Heart right ventricle (tissue), 16 donors: ENCODE measurements at regions of chr11 and their contacts with region 1.

Region 1: GRCh38 chr11:62306227-62306626 is 7.4 kb upstream of the SCGB1D4 start:
- DNase-seq: no peak
- ATAC-seq: no peak
- H3K4me3 ChIP-seq: no peak overlapping the region
- H3K27ac ChIP-seq: no peak overlapping the region
- H3K4me1 ChIP-seq: peaks cover 0 to 4% (median 0%) of the 10 kb centered on the region in 9 donors
- H3K27me3 ChIP-seq: peaks cover 0 to 23% (median 19%) of the 10 kb centered on the region in 7 donors
- CTCF ChIP-seq: no peak

Region 2: GRCh38 chr11:62217191-62217748 is 89.0 kb before region 1 on chr11:
- intact Hi-C with region 1: loop called in 2 of 10 experiments (anchors 5 to 10 kb)
- DNase-seq: no peak
- ATAC-seq: no peak
- H3K4me3 ChIP-seq: no peak overlapping the region
- H3K27ac ChIP-seq: no peak overlapping the region
- H3K4me1 ChIP-seq: no peaks in the 10 kb centered on the region
- H3K27me3 ChIP-seq: peaks cover 0 to 13% (median 2%) of the 10 kb centered on the region in 7 donors
- CTCF ChIP-seq: peak in 4 of 9 donors; percentile 14 to 42 (median 28)

Region 3: DNA sequence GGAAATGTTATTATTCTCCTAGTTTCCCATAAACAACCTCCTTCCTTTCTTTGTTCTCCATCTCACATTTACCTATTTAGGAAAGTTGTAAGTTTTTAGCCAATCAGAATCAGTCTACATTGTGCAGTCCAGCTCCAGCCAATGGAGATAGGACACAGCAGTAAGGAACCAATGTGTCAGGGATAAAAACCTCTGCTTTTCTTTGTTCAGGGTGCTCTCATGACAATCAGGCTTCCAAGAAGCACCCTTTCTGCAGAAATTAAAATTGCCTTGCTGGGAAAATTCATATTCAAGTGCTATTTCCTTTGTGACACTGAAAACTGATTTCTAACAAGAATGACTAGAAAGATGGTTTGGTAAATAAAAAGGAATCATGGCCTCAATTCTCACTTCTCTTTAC is 83.1 kb before region 1 on chr11:
- intact Hi-C with region 1: loop called in 2 of 10 experiments (anchors 5 to 10 kb)
- DNase-seq: no peak
- ATAC-seq: no peak
- H3K4me3 ChIP-seq: no peak overlapping the region
- H3K27ac ChIP-seq: no peak overlapping the region
- H3K4me1 ChIP-seq: no peaks in the 10 kb centered on the region
- H3K27me3 ChIP-seq: peaks cover 0 to 5% (median 0%) of the 10 kb centered on the region in 7 donors
- CTCF ChIP-seq: no peak